HepG2 (cell line): ENCODE measurements at regions of chr2 and their contacts with region 1.

Region 1: GRCh38 chr2:39898934-39899333 is 119.9 kb upstream of the THUMPD2 start:
- DNase-seq: no peak
- ATAC-seq: no peak
- H3K4me3 ChIP-seq: no peak overlapping the region
- H3K27ac ChIP-seq: no peak overlapping the region
- H3K4me1 ChIP-seq: no peaks in the 10 kb centered on the region
- H3K27me3 ChIP-seq: peaks cover 0 to 6% of the 10 kb centered on the region in 2 experiments; a peak in 2 of 5 replicates
- CTCF ChIP-seq: no peak
- EP300 ChIP-seq: no peak
- POLR2A ChIP-seq: no peak
- RAD21 ChIP-seq: no peak

Region 2: GRCh38 chr2:41142478-41142877 is 1243.5 kb after region 1 on chr2:
- CTCF ChIA-PET with region 1: no interaction called
- POLR2A ChIA-PET with region 1: no interaction called
- in situ Hi-C with region 1: no loop called
- intact Hi-C with region 1: loop called (anchors 10 kb)
- DNase-seq: peak; percentile 8
- ATAC-seq: peak; percentile 88
- H3K4me3 ChIP-seq: no peak overlapping the region
- H3K27ac ChIP-seq: no peak overlapping the region
- H3K4me1 ChIP-seq: peaks cover 14% of the 10 kb centered on the region
- H3K27me3 ChIP-seq: no peaks in the 10 kb centered on the region
- CTCF ChIP-seq: no peak
- EP300 ChIP-seq: no peak
- POLR2A ChIP-seq: no peak
- RAD21 ChIP-seq: no peak